Right lobe of liver (tissue), 6 donors: ENCODE measurements at regions of chr12 and their contacts with region 1.

Region 1: GRCh38 chr12:48795480-48796455 is 6.9 kb upstream of the ADCY6 start:
- DNase-seq: peak in 2 of 3 donors; percentile 47 to 62
- ATAC-seq: peak; percentile 97 to 100 (median 99)
- H3K4me3 ChIP-seq: no peak overlapping the region
- H3K27ac ChIP-seq: no peak overlapping the region
- H3K4me1 ChIP-seq: peaks cover 0 to 6% (median 0%) of the 10 kb centered on the region in 4 donors
- H3K27me3 ChIP-seq: no peaks in the 10 kb centered on the region
- CTCF ChIP-seq: peak; percentile 89 to 99 (median 90)
- POLR2A ChIP-seq: no peak

Region 2: GRCh38 chr12:48414021-48414420 is 381.7 kb before region 1 on chr12:
- intact Hi-C with region 1: no loop called
- DNase-seq: no peak
- ATAC-seq: peak; percentile 61 to 91 (median 76)
- H3K4me3 ChIP-seq: no peak overlapping the region
- H3K27ac ChIP-seq: no peak overlapping the region
- H3K4me1 ChIP-seq: no peaks in the 10 kb centered on the region
- H3K27me3 ChIP-seq: no peaks in the 10 kb centered on the region
- CTCF ChIP-seq: no peak
- POLR2A ChIP-seq: no peak

Region 3: DNA sequence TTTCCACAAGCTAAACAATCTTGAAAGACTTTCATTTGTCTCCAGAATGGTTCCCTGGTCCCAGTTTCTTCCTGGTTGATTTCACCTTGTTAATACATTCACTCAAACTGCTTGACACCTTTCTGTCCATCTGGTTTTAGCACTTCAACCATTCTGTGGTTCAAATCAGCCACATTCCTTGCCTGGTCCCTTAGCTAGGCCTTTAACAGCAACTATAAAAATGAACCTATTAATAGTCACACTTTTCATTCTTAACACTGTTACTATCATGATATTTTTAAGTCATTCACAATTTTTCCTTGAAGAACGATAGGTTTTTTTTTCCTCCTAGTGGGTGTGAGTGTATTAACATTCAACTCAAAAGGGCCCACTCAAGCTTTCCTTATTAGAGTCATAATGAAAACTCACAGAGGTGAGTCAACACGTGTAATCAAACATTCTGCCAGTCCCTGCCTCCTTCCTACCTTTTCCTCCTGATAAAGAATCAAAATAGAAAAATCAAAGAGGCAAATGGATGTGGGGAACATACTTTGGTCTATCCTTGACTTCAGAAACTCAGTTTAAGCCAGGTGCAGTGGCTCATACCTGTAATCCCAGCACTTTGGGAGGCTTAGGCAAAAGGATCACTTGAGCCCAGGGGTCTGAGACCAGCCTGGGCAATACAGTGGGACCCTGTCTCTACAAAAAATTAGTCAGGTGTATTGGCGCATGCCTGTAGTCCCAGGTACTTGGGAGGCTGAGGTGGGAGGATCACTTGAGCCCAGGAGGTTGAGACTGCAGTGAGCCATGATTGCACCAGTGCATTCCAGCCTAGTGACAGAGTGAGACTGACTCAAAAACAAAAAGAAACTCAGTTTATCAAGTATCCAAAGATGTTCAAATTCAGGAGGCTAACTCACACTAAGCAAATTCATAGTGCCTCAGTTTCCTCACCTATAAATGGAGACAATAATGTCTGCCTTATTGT is 44.7 kb before region 1 on chr12:
- intact Hi-C with region 1: loop called (anchors 5 kb)
- DNase-seq: no peak
- ATAC-seq: no peak
- H3K4me3 ChIP-seq: no peak overlapping the region
- H3K27ac ChIP-seq: no peak overlapping the region
- H3K4me1 ChIP-seq: no peaks in the 10 kb centered on the region
- H3K27me3 ChIP-seq: no peaks in the 10 kb centered on the region
- CTCF ChIP-seq: no peak
- POLR2A ChIP-seq: no peak

Region 4: DNA sequence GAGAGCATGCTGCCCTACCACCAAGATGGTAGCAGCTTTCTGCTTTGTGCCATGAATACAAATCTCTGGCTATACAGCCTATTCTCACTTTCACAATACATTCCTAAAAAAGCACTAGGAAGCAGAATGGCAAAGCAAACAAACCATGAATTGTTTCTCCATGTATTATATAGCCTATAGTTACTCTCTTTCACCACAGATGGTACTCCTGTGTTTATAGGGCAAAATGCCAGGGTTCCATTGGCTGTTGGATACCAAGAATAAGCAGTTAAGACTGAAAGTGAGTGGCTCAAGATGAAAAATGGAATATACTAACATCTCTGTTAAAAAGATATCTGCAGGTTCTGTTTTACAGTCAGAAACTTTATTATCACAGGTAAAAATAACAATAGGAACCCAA is 150.4 kb after region 1 on chr12:
- intact Hi-C with region 1: no loop called
- DNase-seq: no peak
- ATAC-seq: no peak
- H3K4me3 ChIP-seq: no peak overlapping the region
- H3K27ac ChIP-seq: no peak overlapping the region
- H3K4me1 ChIP-seq: no peaks in the 10 kb centered on the region
- H3K27me3 ChIP-seq: no peaks in the 10 kb centered on the region
- CTCF ChIP-seq: no peak
- POLR2A ChIP-seq: no peak